Transverse colon (tissue), 4 donors: ENCODE measurements at regions of chr3 and their contacts with region 1.

Region 1: DNA sequence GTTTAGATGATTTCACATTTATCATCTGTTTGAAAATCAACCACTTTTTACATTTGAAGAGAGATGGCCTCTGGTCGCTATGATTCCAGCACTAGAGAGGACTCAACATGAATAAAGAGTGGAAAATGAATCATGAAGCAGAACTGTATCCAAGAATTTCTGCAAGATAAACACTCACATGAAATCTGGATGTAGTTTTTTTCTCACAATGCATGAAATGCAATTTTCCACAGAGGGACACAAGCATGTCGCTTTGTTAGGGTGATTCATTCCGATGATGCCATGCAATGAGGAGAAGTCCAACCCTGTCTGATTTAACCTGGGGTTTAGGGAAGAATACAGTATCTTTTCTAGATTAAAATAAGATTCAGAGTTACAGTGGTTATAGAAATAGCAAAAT is 50.4 kb upstream of the ADCY5 start:
- DNase-seq: no peak
- H3K4me3 ChIP-seq: no peak overlapping the region
- H3K27ac ChIP-seq: no peak overlapping the region
- H3K4me1 ChIP-seq: peaks cover 0 to 8% (median 2%) of the 10 kb centered on the region in 4 donors
- H3K27me3 ChIP-seq: no peaks in the 10 kb centered on the region
- CTCF ChIP-seq: no peak
- EP300 ChIP-seq: no peak
- POLR2A ChIP-seq: no peak

Region 2: DNA sequence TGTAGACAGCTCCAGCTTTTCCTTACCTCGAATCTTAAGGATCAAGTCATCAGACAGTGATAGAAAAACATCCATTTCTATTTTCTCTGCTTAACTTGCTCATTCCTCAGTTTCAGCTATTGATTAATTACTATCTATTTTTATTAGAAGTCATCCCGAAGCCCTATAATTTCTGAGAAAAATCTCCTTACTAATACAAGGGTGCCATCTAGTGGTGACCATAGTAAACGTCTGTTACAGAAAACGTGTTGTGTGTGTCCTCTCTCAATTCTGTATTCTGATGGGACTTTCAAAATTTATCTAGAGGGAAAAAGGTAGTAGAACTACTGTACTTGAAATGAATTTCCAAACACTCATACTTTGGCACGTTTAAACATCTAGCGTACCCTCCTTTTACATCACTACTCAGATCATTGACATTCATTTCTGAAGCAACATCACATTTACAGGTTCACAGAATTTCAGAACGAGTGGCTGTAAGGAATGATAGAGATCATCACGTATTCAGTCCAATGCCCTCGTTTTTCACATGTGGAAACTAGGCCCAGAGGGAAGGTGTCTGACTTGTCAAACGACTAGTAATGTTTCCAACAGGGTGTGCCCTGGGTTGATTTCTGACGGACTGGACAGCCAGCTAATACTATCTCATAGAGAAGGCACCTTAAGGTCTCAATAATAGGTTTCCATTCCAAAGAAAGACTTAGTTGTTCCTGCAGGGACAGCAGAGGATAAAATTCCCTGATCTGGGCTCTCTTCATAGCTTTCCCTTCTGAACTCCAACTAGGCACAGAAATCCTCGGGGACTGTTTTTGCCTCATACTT is 59.9 kb after region 1 on chr3:
- in situ Hi-C with region 1: no loop called
- intact Hi-C with region 1: loop called (anchors 5 kb)
- DNase-seq: no peak
- H3K4me3 ChIP-seq: no peak overlapping the region
- H3K27ac ChIP-seq: no peak overlapping the region
- H3K4me1 ChIP-seq: peaks cover 0 to 3% (median 0%) of the 10 kb centered on the region in 4 donors
- H3K27me3 ChIP-seq: no peaks in the 10 kb centered on the region
- CTCF ChIP-seq: peak; percentile 57 to 85 (median 74)
- EP300 ChIP-seq: no peak
- POLR2A ChIP-seq: no peak

Region 3: GRCh38 chr3:123914820-123915219 is 415.5 kb after region 1 on chr3:
- in situ Hi-C with region 1: no loop called
- intact Hi-C with region 1: no loop called
- DNase-seq: no peak
- H3K4me3 ChIP-seq: no peak overlapping the region
- H3K27ac ChIP-seq: no peak overlapping the region
- H3K4me1 ChIP-seq: no peaks in the 10 kb centered on the region
- H3K27me3 ChIP-seq: no peaks in the 10 kb centered on the region
- CTCF ChIP-seq: no peak
- EP300 ChIP-seq: no peak
- POLR2A ChIP-seq: no peak